PC-3 (cell line): ENCODE measurements at regions of chr4 and their contacts with region 1.

Region 1: DNA sequence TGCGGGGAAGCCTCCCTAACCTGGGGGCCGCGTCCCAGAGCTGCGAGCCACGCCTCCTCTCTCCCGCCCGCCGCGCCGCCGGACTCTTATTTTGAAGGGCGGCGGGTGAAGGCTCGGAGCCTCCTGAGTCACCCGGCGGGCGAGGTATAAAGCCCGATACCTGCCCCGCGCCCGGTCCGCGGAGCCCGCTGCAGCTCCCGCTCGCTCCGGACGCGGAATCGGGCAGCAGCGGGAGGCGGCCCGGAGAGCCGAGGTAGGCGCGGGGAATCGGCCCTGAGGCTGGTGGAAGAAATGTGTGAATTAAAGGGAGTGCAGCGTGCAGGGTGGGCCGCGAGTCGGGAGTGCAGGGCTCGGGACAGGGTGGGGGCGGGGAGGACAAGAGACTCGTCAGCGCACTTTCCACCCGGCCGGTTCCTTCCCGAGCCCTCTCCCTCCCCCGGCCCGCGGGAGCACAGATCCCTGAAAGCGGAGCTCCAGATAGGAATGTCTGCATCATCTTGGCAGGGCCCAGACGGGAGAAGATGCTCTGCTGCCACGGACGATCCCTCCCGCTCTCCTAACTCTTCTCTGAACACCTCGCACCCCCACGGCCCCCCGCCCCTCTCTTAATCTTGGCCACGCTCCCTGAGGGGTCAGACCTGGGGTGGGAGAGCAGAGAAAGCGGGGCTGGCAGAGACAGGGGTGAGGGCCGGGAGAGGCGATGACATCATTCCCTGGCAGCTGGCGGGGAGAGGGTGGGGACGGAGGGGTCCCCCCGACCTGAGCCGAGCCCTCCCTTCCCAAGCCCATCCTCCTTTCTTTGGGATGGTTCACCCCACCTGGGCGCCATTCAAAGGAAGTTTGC is 177.9 kb downstream of the CBR4 start:
- DNase-seq: peak; percentile 78
- ATAC-seq: peak; percentile 80
- H3K4me3 ChIP-seq: peak overlapping the region; percentile 96
- H3K27ac ChIP-seq: peak overlapping the region; percentile 44
- H3K4me1 ChIP-seq: peaks cover 21% of the 10 kb centered on the region; the same call in 1 of the 2 replicates
- H3K27me3 ChIP-seq: no peaks in the 10 kb centered on the region
- CTCF ChIP-seq: no peak

Region 2: GRCh38 chr4:168694648-168695047 is 137.5 kb before region 1 on chr4:
- CTCF ChIA-PET with region 1: no interaction called
- POLR2A ChIA-PET with region 1: interaction called, 3 read pairs
- intact Hi-C with region 1: loop called (anchors 10 kb)
- DNase-seq: peak; percentile 58
- ATAC-seq: no peak
- H3K4me3 ChIP-seq: no peak overlapping the region
- H3K27ac ChIP-seq: peak overlapping the region; percentile 33
- H3K4me1 ChIP-seq: peaks cover 34% of the 10 kb centered on the region
- H3K27me3 ChIP-seq: no peaks in the 10 kb centered on the region
- CTCF ChIP-seq: no peak

Region 3: DNA sequence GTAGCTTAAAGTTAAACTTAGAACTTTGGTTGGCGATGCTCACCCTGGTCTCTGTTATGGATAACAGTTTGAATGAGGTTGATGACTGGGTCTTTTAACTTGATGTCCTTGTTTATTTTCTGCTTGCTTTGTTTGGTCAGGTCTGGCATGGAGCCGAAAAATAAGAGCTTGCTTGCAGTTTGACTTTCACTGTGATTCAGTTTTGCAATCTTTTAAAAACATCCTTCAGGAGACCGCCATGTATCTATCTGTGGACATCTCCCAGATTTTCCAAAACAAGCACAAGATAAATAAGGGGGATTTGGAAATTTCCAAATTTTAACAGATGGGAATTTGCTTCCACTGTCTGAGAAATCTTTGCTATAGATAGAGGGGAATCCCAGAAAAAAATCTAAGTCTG is 88.5 kb before region 1 on chr4:
- CTCF ChIA-PET with region 1: no interaction called
- POLR2A ChIA-PET with region 1: no interaction called
- intact Hi-C with region 1: loop called (anchors 1 kb)
- DNase-seq: peak; percentile 34
- ATAC-seq: peak; percentile 51
- H3K4me3 ChIP-seq: no peak overlapping the region
- H3K27ac ChIP-seq: no peak overlapping the region
- H3K4me1 ChIP-seq: peaks cover 3% of the 10 kb centered on the region; the same call in 1 of the 2 replicates
- H3K27me3 ChIP-seq: no peaks in the 10 kb centered on the region
- CTCF ChIP-seq: no peak

Region 4: DNA sequence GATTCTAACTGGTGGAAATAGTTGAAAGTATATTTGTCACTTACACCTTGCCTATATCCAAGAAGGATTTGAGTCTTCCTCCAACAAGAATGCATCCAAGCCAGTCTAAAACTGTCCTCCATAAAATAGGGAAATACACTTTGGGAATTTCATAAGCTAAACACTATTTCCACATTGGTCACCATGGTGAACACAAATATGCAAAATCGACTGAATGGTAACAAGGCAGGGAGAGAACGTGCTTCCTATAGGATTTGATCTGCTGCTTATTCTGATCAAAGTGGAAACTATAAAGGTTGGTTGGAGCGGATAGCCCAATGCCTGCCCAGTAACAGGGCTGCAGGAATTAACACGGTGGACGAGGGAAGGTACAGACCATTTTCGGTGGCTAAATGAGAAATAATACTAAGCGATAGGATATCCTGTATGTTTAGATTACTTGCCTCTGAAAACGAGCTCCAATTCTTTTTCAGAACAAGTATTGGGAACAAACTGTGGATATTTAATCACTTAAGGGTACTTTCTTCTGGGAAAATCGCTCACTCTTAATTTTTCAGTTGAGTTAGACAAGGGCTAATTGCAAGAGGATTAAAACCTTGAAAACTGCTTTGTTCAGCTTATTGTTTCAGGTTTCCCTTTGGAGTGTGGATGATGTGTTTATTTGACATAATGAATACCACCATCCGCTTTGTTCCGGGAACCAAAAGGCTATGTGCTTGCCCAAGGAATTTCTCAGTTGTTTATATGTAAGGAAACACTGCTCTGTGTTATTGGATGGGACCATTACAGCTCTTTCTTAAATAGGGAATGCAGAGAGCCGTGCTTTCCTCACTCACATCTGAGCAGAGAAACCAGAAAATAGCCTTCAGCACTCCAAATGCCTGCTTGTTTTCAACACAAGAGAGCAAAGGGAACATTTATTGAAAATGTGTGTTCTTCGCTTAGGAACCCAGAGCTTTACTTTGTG is 16.5 kb before region 1 on chr4:
- CTCF ChIA-PET with region 1: interaction called, 4 read pairs
- POLR2A ChIA-PET with region 1: interaction called, 6 read pairs
- intact Hi-C with region 1: loop called (anchors 1 kb)
- DNase-seq: no peak
- ATAC-seq: no peak
- H3K4me3 ChIP-seq: no peak overlapping the region
- H3K27ac ChIP-seq: no peak overlapping the region
- H3K4me1 ChIP-seq: peaks cover 11% of the 10 kb centered on the region
- H3K27me3 ChIP-seq: no peaks in the 10 kb centered on the region
- CTCF ChIP-seq: no peak

Region 5: GRCh38 chr4:168917138-168917779 is 85.1 kb after region 1 on chr4:
- CTCF ChIA-PET with region 1: no interaction called
- POLR2A ChIA-PET with region 1: no interaction called
- intact Hi-C with region 1: loop called (anchors 10 kb)
- DNase-seq: peak; percentile 65
- ATAC-seq: peak; percentile 38; the same call in 1 of the 2 replicates
- H3K4me3 ChIP-seq: no peak overlapping the region
- H3K27ac ChIP-seq: no peak overlapping the region
- H3K4me1 ChIP-seq: no peaks in the 10 kb centered on the region
- H3K27me3 ChIP-seq: no peaks in the 10 kb centered on the region
- CTCF ChIP-seq: peak; percentile 56